AG04449 (cell line): ENCODE measurements at regions of chr6 and their contacts with region 1.

Region 1: GRCh38 chr6:87237804-87238203 is 82.4 kb downstream of the ZNF292 start:
- DNase-seq: no peak
- H3K4me3 ChIP-seq: no peak overlapping the region
- CTCF ChIP-seq: peak; percentile 19

Region 2: DNA sequence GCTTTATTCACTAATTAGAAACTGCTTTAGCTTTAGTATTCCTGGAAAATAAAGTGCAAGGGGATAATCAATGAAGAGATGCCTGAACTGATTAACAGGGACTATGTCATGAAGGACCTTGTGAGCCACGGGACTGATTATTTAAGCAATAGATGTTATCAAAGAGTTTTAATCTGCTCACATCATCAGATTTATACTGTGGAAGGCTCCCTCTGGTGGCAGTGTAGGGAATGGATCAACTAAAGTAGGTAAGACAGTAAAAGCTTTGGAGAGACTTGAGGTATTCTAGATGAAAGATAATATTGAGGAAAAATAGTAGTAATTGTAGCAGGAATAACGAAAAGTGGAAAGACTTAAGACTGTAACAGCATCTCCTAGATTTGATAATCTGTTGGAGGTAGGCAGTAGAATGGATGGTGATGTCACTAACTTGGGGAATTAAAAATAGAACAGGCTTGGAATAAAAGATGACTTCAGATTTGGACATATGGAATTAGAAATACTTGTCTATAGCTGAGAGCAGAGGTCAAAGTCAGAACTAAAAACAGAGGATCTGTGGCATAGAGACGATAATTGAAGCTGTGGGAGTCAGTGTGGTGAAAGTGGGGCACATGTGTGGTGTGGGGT is 380.8 kb before region 1 on chr6:
- CTCF ChIA-PET with region 1: no interaction called
- POLR2A ChIA-PET with region 1: no interaction called
- DNase-seq: no peak
- H3K4me3 ChIP-seq: no peak overlapping the region
- CTCF ChIP-seq: peak; percentile 33

Region 3: DNA sequence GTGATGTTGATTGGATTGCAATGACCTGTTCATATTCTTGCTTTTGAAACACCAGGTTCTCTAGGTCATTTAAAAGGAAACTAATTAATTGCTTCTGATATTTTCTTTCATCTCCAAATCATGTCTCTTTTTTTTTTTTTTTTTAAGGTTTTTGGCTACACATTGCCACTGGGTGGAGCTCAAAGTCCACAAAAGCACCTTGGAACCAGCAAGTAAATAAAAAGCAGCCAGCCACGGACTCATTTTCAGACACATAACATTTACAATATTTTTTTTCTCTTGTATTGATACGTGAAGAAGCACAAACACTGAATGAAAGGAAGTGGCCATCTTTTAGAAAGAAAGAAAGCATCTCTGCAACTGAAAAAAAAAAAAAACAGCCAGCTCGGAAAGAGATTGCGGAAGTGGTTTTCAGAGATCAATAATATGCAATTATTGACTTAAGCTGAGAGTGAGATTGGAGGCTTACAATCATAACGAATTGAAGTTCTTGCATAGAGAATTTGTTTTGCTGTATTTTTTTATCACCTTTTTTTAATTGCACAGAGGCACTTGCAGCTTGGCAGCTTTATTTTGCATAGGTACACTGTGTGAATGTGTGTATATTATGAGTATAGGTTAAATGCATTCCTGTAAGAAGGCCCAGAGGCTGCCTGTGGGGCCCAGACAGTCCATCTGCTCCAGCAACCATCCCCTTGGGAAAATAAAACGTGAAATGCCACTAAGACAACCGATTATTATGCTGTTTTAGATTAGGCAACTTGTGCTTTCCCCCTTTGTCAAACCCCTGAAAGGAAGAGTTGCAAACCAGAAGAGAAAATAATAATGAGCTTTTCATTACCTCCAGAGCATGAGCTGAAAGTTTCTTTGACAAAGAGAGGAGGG is 171.1 kb before region 1 on chr6:
- CTCF ChIA-PET with region 1: interaction called, 10 read pairs
- POLR2A ChIA-PET with region 1: no interaction called
- DNase-seq: peak; percentile 21
- H3K4me3 ChIP-seq: no peak overlapping the region
- CTCF ChIP-seq: peak; percentile 39

Region 4: DNA sequence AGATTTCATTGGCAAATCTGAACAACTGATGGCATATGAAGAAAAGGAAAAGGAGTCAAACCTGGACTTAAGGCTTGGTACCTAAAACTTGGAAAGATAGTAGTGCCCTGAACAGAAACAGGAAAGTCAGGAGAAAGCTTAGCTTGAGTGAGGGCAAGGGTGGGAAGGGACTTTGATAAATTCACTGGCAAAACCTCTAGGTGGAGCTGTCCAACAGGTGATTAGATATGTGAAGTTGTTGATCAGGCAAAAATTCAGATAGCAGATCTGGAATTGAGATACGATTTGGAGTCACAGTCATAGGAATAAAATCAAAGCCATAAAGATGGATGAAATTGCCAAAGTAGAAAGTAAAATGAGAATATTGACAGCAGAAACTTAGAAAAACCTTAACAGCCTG is 98.6 kb before region 1 on chr6:
- CTCF ChIA-PET with region 1: interaction called, 11 read pairs
- POLR2A ChIA-PET with region 1: no interaction called
- DNase-seq: no peak
- H3K4me3 ChIP-seq: no peak overlapping the region
- CTCF ChIP-seq: peak; percentile 43

Region 5: GRCh38 chr6:87393022-87393622 is 155.3 kb after region 1 on chr6:
- CTCF ChIA-PET with region 1: no interaction called
- POLR2A ChIA-PET with region 1: no interaction called
- DNase-seq: no peak
- H3K4me3 ChIP-seq: no peak overlapping the region
- CTCF ChIP-seq: peak; percentile 38